PC-9 (cell line): ENCODE measurements at regions of chr15 and their contacts with region 1.

Region 1: DNA sequence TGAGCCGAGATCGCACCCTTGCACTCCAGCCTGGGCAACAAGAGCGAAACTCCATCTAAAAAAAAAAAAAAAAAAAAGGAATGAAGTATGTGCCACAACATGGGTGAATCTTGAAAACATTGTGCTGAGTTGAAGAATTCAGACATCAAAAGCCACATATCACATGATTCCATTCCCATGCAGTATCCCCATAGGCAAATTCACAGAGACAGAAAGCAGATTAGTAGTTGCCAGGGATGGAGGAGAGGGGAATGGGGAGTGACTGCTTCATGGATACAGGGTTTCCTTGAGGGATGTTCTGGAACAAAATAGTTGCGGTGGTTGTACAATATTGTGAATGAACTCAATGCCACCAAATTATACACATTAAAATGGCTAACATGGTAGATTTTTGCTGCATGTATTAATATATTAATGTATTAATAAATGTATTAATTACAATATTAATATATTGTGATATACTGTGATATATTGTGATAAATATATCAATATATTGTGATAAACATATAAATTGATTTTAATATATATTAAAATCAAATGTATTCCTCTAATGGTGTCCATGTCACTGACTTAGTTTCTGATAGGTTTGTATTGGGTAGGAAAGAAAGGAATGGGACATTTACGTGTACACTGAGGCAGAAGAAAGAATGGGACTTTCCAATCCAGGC is 34.9 kb downstream of the SMAD3 start:
- DNase-seq: no peak
- H3K4me3 ChIP-seq: no peak overlapping the region
- H3K27ac ChIP-seq: peak overlapping the region; percentile 4; the same call in 1 of the 2 replicates
- H3K4me1 ChIP-seq: peaks cover 50% of the 10 kb centered on the region
- H3K27me3 ChIP-seq: no peaks in the 10 kb centered on the region
- CTCF ChIP-seq: no peak

Region 2: DNA sequence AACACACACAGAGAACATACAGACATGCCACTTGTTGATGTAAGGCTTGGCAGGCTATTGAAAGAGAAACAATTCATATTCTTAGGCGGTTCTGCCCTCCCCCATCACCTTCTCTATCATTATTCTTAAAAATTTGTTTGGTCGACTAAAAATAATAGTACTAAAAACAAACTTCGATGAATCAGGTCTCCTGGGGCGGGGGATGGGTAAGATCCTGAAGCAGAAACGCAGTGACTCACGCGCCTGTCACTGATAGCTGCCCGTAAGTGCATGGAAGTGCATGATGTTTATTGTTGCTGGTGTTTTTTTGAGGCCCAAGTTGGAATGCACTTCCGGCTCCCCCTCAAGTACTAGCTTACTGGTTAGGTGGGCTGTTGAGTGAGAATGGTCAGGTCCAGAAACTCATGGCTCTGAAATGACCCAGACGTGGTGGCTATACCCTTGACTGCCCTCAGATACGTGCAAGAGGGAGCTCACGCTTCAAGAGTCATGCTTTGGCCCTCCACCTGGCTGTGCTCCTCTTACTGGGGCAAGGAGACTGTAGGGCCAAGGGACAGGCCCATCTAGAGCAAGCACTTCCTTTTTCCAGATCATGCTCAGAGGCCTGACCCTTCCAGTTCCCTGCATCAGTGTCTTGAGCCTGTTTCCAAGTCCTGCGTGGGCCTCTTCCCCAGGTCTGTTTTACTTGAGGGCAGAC is 24.0 kb before region 1 on chr15:
- CTCF ChIA-PET with region 1: interaction called, 15 read pairs
- POLR2A ChIA-PET with region 1: no interaction called
- intact Hi-C with region 1: no loop called
- DNase-seq: peak in 1 of 2 experiments; percentile 62
- H3K4me3 ChIP-seq: no peak overlapping the region
- H3K27ac ChIP-seq: peak overlapping the region; percentile 43; the same call in 1 of the 2 replicates
- H3K4me1 ChIP-seq: peaks cover 97% of the 10 kb centered on the region
- H3K27me3 ChIP-seq: no peaks in the 10 kb centered on the region
- CTCF ChIP-seq: no peak

Region 3: DNA sequence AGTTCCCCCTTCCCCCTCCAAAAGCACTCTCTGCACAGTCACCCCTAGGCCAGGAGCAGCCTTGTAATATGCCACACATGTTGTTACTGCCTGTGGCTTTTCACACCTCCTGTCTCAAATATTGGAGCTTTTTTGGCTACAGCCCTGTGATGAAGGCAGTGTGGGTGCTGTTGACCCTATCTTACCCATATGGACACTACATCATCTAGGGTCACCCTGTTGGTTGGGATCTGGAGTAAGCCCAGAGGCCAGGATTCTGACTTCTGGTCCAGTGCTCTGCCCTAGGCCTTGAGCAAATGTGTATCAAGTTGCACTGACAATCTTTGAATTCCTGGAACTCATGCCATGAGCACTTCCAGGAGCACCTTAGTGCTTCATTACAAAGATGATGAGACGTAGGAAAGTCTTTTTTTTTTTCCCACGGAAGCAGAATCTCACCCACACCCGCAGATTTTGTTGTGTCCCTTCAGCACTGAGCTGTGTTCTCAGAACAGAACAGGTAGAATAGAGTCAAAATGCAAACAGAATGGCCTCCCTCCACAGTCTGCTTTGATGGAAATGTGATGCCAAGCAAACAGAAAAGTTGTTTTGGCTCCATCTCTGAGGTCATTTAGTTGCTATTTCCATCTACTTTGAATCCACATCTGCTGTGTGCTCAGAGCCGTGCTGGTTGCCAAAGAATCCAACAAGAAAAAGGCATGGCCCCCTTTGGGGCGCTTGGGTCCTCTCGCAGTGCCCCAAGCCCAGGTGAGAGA is 14.8 kb after region 1 on chr15:
- CTCF ChIA-PET with region 1: no interaction called
- POLR2A ChIA-PET with region 1: no interaction called
- intact Hi-C with region 1: no loop called
- DNase-seq: peak in 1 of 2 experiments; percentile 61
- H3K4me3 ChIP-seq: no peak overlapping the region
- H3K27ac ChIP-seq: peak overlapping the region; percentile 60
- H3K4me1 ChIP-seq: peaks cover 69% of the 10 kb centered on the region
- H3K27me3 ChIP-seq: no peaks in the 10 kb centered on the region
- CTCF ChIP-seq: no peak

Region 4: GRCh38 chr15:67240235-67241131 is 140.2 kb after region 1 on chr15:
- CTCF ChIA-PET with region 1: no interaction called
- POLR2A ChIA-PET with region 1: no interaction called
- intact Hi-C with region 1: no loop called
- DNase-seq: peak in 1 of 2 experiments; percentile 11
- H3K4me3 ChIP-seq: no peak overlapping the region
- H3K27ac ChIP-seq: no peak overlapping the region
- H3K4me1 ChIP-seq: peaks cover 4% of the 10 kb centered on the region
- H3K27me3 ChIP-seq: no peaks in the 10 kb centered on the region
- CTCF ChIP-seq: peak; percentile 52; the same call in 1 of the 2 replicates